HepG2 (cell line): ENCODE measurements at regions of chr6 and their contacts with region 1.

Region 1: GRCh38 chr6:26342106-26343004 is 22.6 kb upstream of the BTN3A2 start:
- DNase-seq: no peak
- ATAC-seq: peak; percentile 44
- H3K4me3 ChIP-seq: peak overlapping the region in 1 of 3 experiments; percentile 30; a peak in 2 of 6 replicates
- H3K27ac ChIP-seq: no peak overlapping the region
- H3K4me1 ChIP-seq: peaks cover 74% of the 10 kb centered on the region
- H3K27me3 ChIP-seq: no peaks in the 10 kb centered on the region
- CTCF ChIP-seq: no peak
- EP300 ChIP-seq: no peak
- POLR2A ChIP-seq: no peak
- RAD21 ChIP-seq: no peak

Region 2: GRCh38 chr6:26389349-26389894 is 47.1 kb after region 1 on chr6:
- CTCF ChIA-PET with region 1: no interaction called
- POLR2A ChIA-PET with region 1: no interaction called
- in situ Hi-C with region 1: no loop called
- intact Hi-C with region 1: no loop called
- DNase-seq: no peak
- ATAC-seq: no peak
- H3K4me3 ChIP-seq: no peak overlapping the region
- H3K27ac ChIP-seq: no peak overlapping the region
- H3K4me1 ChIP-seq: peaks cover 22% of the 10 kb centered on the region
- H3K27me3 ChIP-seq: no peaks in the 10 kb centered on the region
- CTCF ChIP-seq: no peak
- EP300 ChIP-seq: no peak
- POLR2A ChIP-seq: no peak
- RAD21 ChIP-seq: no peak

Region 3: GRCh38 chr6:26415791-26416190 is 73.4 kb after region 1 on chr6:
- CTCF ChIA-PET with region 1: interaction called, 17 read pairs
- POLR2A ChIA-PET with region 1: no interaction called
- in situ Hi-C with region 1: loop called (anchors 5 kb)
- intact Hi-C with region 1: loop called (anchors 1 kb)
- DNase-seq: no peak
- ATAC-seq: no peak
- H3K4me3 ChIP-seq: no peak overlapping the region
- H3K27ac ChIP-seq: no peak overlapping the region
- H3K4me1 ChIP-seq: peaks cover 46% of the 10 kb centered on the region
- H3K27me3 ChIP-seq: no peaks in the 10 kb centered on the region
- CTCF ChIP-seq: no peak
- EP300 ChIP-seq: no peak
- POLR2A ChIP-seq: no peak
- RAD21 ChIP-seq: no peak

Region 4: DNA sequence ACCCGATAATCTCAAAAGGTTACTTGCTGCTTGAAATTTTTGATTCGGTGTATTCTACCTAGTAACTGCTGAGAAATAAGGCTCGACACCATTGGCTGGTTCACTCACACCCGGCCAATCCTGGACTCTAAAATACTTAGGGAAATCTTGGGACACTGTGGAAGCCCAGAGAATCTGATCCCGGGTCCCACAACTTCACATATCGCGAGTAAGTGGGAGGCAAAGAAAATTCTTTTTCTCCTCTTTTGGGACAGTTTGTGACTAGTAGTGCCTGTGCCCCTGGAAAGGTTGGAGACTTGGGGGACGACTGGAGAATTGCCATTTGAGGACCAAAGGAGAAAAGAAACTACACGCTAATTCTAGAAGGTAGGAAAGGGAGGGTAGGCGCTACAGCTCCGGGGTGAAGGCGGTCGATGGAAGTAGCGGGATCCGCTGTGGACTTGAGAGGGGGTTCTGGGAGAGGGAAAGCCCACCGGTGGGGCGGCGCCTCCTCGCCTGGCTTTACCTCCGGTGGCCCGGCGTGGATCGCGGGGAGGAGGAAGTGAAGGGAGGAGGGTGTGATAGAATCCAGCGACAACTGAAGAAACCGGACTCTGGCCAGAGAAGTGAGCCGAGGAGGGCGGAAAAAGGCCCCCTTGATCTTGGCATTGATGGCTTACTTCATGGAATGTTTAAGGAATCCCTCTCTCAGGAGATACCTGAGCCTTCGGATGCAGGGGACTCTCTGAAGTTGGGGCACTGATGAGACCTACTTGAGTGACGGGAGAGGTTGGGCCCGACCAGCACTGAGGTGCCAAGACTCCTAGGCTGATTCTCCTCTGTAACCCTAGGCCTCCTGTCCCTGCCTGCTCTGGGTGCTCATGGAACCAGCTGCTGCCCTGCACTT is 79.1 kb after region 1 on chr6:
- CTCF ChIA-PET with region 1: interaction called, 17 read pairs
- POLR2A ChIA-PET with region 1: no interaction called
- in situ Hi-C with region 1: loop called (anchors 5 kb)
- intact Hi-C with region 1: loop called (anchors 1 kb)
- DNase-seq: peak; percentile 93
- ATAC-seq: peak; percentile 99
- H3K4me3 ChIP-seq: peak overlapping the region; percentile 79 to 85 (median 80)
- H3K27ac ChIP-seq: peak overlapping the region; percentile 60
- H3K4me1 ChIP-seq: peaks cover 48% of the 10 kb centered on the region
- H3K27me3 ChIP-seq: no peaks in the 10 kb centered on the region; a peak in 1 of 5 replicates
- CTCF ChIP-seq: peak; percentile 18; the same call in 1 of the 2 replicates
- EP300 ChIP-seq: no peak
- POLR2A ChIP-seq: peak; percentile 46 to 69
- RAD21 ChIP-seq: peak; percentile 26; the same call in 1 of the 2 replicates

Region 5: GRCh38 chr6:26493258-26493657 is 150.9 kb after region 1 on chr6:
- CTCF ChIA-PET with region 1: interaction called, 14 read pairs
- POLR2A ChIA-PET with region 1: no interaction called
- in situ Hi-C with region 1: no loop called
- intact Hi-C with region 1: loop called (anchors 1 kb)
- DNase-seq: peak; percentile 52
- ATAC-seq: peak; percentile 95
- H3K4me3 ChIP-seq: no peak overlapping the region
- H3K27ac ChIP-seq: no peak overlapping the region
- H3K4me1 ChIP-seq: peaks cover 21% of the 10 kb centered on the region
- H3K27me3 ChIP-seq: peaks cover 2 to 10% of the 10 kb centered on the region in 2 experiments; a peak in 1 of 5 replicates
- CTCF ChIP-seq: peak; percentile 64
- EP300 ChIP-seq: no peak
- POLR2A ChIP-seq: no peak
- RAD21 ChIP-seq: peak; percentile 66

Region 6: DNA sequence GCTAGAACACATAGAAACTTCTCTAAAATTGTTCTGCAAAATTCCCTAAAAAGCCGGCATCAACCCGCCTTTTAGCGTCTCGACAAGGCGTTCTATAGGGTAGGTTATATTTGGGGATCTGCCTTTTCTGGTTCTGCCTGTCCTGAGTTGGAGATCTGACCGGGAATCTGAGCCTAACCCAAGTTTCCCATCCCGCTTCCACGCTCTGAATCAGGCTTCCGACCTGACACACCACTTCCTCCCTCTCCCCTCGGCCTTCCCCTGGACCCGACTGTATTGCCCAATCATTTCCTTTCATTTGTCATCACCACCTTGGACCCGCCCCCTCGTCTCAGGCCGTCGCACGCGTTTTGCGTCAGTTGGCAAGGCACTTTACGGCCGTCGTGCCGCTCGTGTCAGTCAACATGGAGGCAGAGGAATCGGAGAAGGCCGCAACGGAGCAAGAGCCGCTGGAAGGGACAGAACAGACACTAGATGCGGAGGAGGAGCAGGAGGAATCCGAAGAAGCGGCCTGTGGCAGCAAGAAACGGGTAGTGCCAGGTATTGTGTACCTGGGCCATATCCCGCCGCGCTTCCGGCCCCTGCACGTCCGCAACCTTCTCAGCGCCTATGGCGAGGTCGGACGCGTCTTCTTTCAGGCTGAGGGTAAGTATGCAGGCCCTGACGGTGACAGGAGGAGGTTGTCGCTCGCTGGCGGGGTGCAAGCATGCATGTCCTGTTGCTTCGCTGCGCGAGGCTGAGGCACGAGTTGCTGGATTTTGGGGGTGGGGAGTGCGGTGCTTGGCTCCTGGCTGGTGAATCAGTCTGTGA is 254.4 kb after region 1 on chr6 and contains the start of gene ABT1:
- CTCF ChIA-PET with region 1: interaction called, 18 read pairs
- POLR2A ChIA-PET with region 1: interaction called, 6 read pairs
- in situ Hi-C with region 1: no loop called
- intact Hi-C with region 1: loop called (anchors 1 kb)
- DNase-seq: peak; percentile 99
- ATAC-seq: peak; percentile 74
- H3K4me3 ChIP-seq: peak within 1 kb of the TSS; percentile 87 to 100 (median 88)
- H3K27ac ChIP-seq: peak within 1 kb of the TSS; percentile 80
- H3K4me1 ChIP-seq: peaks cover 31% of the 10 kb centered on the region
- H3K27me3 ChIP-seq: no peaks in the 10 kb centered on the region; a peak in 1 of 5 replicates
- CTCF ChIP-seq: peak; percentile 43
- EP300 ChIP-seq: peak; percentile 42 to 72; a peak in 2 of 4 replicates
- POLR2A ChIP-seq: peak; percentile 86 to 94
- RAD21 ChIP-seq: no peak
- total RNA-seq, gene ABT1: 38.4 and 50.8 TPM in 2 replicates